ENCODE measurements at regions of chr13 and their contacts with region 1.

Region 1: GRCh38 chr13:21785989-21786388 is 115.1 kb downstream of the FGF9 start:
- DNase-seq: no peak
- ATAC-seq: no peak
- H3K4me3 ChIP-seq: no peak overlapping the region
- H3K27ac ChIP-seq: no peak overlapping the region
- H3K4me1 ChIP-seq: no peaks in the 10 kb centered on the region
- H3K27me3 ChIP-seq: no peaks in the 10 kb centered on the region
- CTCF ChIP-seq: no peak

Region 2: GRCh38 chr13:21901801-21902708 is 116.1 kb after region 1 on chr13:
- CTCF ChIA-PET with region 1: no interaction called
- POLR2A ChIA-PET with region 1: no interaction called
- in situ Hi-C with region 1: no loop called
- intact Hi-C with region 1: loop called (anchors 5 kb)
- DNase-seq: no peak
- ATAC-seq: no peak
- H3K4me3 ChIP-seq: no peak overlapping the region
- H3K27ac ChIP-seq: no peak overlapping the region
- H3K4me1 ChIP-seq: no peaks in the 10 kb centered on the region
- H3K27me3 ChIP-seq: no peaks in the 10 kb centered on the region
- CTCF ChIP-seq: no peak